Activated CD4-positive, alpha-beta T cell treated with anti-CD3 and anti-CD28 coated beads for 36 hours (primary cell): ENCODE measurements at regions of chr20 and their contacts with region 1.

Region 1: DNA sequence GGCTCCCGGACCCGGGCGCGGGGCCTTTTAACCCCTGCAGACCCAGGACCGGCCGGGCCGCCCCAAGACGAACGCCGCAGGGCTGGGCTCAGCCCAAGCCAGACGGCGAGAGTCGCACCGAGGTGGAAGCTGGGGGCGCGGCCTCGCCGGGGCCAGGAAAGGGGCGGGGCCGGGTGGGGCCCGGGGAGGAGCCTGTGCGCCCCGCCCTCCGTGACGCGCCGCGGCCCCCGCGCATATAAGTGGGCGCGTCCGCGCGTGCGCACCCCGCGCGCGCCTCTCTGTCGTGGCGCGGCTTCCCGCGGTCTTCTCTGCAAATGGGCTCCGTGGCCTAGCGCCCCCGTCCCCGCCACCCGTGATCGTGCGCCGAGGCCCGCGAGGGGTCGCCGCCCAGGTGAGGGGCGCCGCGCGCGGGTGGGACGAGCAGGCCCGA is at the start of gene PPDPF:
- DNase-seq: peak; percentile 93
- ATAC-seq: peak; percentile 80
- H3K4me3 Mint-ChIP-seq: peak within 1 kb of the TSS; percentile 77
- H3K27ac Mint-ChIP-seq: peak within 1 kb of the TSS; percentile 78
- H3K4me1 Mint-ChIP-seq: peaks cover 10% of the 10 kb centered on the region
- H3K27me3 Mint-ChIP-seq: no peaks in the 10 kb centered on the region
- total RNA-seq, gene PPDPF: 119 to 133 TPM

Region 2: DNA sequence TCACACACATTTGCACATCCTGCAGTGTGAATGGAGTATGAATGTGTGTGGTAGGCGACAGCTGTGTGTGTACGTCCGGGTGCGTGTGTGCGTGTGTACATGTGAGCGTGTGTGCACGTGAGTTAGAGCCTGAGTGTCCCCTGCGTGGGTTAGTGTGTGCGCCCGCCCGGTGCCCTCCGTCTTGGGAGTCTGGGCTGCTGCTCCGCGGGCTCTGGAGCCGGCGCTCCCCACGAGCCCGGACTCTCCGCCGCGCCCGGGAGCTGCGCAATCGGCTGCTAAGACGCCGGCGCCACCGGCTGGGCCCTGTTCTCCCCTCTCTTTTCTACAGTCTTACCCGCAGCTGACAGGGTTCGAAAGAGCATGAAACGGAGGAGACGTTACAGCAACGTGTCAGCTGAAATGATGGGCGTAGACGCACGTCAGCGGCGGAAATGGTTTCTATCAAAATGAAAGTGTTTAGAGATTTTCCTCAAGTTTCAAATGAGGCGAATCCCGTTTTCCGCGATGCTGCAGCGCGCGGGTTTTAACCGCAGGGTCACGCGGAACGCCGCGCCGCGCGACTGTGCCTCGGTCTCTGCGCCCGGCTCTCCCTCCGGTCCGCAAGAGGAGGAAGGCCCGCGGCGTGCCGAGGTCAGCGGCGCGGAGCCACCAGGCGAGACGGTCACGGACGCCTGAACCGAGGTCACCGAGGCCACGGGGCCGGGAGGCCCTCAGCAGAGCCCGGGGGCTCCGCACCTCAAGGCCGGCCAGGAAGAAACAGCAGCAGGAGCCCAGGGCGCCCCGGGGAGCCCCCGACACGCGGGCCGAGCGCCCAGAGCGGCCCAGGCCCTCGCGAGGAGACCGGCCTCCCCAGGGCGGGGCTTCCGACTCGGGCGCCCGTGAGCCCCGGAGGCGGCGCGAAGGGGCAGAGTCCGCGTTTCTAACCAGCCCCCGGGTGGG is 418.5 kb before region 1 on chr20:
- CTCF ChIA-PET with region 1: no interaction called
- POLR2A ChIA-PET with region 1: no interaction called
- intact Hi-C with region 1: loop called in 1 of 2 experiments (anchors 2 kb)
- DNase-seq: peak; percentile 85
- ATAC-seq: peak; percentile 74
- H3K4me3 Mint-ChIP-seq: peak overlapping the region; percentile 77
- H3K27ac Mint-ChIP-seq: peak overlapping the region; percentile 87
- H3K4me1 Mint-ChIP-seq: peaks cover 5% of the 10 kb centered on the region
- H3K27me3 Mint-ChIP-seq: no peaks in the 10 kb centered on the region

Region 3: DNA sequence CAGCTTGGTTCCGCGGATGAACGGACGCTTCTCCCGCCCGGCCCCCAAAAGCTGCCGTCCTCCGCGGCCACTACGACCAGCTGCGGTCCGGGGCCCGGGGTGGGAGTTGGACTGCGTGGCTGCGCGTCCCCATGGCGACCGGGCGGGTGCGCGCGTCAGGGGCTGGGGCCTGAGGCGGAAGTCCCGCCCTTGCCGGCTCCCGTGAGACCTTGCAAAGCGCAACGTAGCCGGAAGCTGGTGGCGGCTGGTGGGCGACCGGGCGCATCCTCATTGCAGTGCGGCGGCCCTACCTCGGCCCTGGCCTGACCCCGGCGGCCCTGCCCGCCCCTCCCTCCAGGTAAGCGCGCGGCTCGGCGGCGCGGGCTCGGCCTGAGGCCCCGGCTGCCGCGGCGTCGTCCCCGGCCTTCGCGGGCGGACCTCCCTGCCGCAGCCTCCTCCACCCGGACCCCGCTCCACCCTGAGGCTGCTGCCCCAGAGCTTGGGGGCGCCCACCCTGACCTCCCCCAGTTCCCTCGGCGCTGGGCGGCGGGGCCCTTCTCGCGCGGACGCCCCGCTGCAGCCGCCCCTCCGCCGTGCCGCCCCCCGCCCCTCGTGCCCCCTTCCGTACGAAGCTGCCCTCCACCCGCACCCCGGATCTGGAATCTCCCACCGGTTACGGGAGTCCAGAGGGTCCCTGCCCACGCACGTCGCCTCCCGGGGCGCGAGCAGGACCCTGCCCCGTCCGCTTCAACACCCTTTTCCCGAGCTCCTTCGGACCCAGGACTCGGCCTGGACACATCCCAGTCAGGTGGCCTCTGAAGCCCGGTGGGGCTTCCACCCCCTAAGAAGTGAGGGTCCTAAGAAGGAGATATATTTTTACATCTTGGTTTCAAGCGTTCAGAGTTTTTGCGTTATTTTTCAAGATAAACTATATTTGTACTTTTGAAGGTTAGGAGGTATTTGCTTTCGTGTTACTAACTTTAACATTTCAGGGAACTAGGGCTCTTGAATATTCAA is 247.6 kb before region 1 on chr20 and contains the start of gene ARFGAP1:
- CTCF ChIA-PET with region 1: no interaction called
- POLR2A ChIA-PET with region 1: no interaction called
- intact Hi-C with region 1: loop called in 1 of 2 experiments (anchors 5 kb)
- DNase-seq: peak; percentile 94
- ATAC-seq: peak; percentile 99
- H3K4me3 Mint-ChIP-seq: peak within 1 kb of the TSS; percentile 79
- H3K27ac Mint-ChIP-seq: peak within 1 kb of the TSS; percentile 83
- H3K4me1 Mint-ChIP-seq: peaks cover 27% of the 10 kb centered on the region
- H3K27me3 Mint-ChIP-seq: no peaks in the 10 kb centered on the region
- total RNA-seq, gene ARFGAP1: 73.4 to 77.6 TPM

Region 4: GRCh38 chr20:63495741-63496595 is 24.6 kb before region 1 on chr20:
- CTCF ChIA-PET with region 1: interaction called, 4 read pairs
- POLR2A ChIA-PET with region 1: no interaction called
- intact Hi-C with region 1: loop called (anchors 1 to 2 kb)
- DNase-seq: peak; percentile 88
- ATAC-seq: peak; percentile 80
- H3K4me3 Mint-ChIP-seq: peak overlapping the region; percentile 43
- H3K27ac Mint-ChIP-seq: no peak overlapping the region
- H3K4me1 Mint-ChIP-seq: peaks cover 2% of the 10 kb centered on the region
- H3K27me3 Mint-ChIP-seq: peaks cover 14% of the 10 kb centered on the region

Region 5: GRCh38 chr20:63641792-63642544 is 121.4 kb after region 1 on chr20:
- CTCF ChIA-PET with region 1: interaction called, 3 read pairs
- POLR2A ChIA-PET with region 1: no interaction called
- intact Hi-C with region 1: loop called in 1 of 2 experiments (anchors 1 kb)
- DNase-seq: peak; percentile 98
- ATAC-seq: peak; percentile 73
- H3K4me3 Mint-ChIP-seq: peak overlapping the region; percentile 65
- H3K27ac Mint-ChIP-seq: no peak overlapping the region
- H3K4me1 Mint-ChIP-seq: peaks cover 31% of the 10 kb centered on the region
- H3K27me3 Mint-ChIP-seq: no peaks in the 10 kb centered on the region

Region 6: DNA sequence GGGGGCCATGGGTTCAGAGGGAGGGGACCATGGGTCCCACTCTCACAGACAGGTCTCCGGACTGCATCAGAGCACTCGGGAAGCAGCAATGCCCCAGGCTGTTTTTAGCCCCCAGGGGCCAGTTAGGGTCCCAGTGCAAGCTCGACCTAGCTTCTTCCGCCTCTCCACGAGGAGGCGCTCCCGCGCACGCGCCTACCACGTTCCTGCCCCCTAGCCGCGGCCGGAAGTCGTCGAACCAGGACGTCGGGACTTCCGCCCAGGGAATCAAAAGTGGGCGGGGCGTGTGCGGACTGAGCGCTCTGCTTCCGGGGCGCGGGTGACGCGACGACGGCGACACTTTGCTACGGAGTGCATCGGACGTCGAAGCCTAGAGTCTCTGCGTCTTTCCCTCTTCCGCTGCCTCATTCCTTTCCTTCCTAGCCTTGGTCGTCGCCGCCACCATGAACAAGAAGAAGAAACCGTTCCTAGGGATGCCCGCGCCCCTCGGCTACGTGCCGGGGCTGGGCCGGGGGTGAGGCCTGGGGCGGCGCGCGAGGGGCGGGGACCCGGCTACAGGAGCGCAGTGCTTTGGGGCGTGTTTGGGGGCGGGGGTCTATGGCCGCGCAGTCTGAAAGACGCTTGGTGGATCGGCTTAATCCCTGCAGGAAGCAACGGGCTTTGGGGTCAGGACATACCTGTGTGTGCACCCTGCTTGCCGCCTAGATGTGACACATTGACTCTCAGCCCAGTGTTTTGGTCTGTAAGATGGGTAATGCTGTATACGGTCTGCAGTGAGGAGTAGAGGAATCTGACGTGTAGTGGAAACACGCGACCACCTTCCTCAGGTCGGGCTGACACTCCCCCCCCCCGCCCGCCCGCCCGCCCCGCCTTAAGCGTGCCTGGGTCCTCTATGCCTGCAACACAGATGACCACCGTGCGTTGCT is 460.5 kb after region 1 on chr20 and contains the start of gene PRPF6:
- CTCF ChIA-PET with region 1: no interaction called
- POLR2A ChIA-PET with region 1: interaction called, 4 read pairs
- intact Hi-C with region 1: loop called in 1 of 2 experiments (anchors 1 kb)
- DNase-seq: peak; percentile 98
- ATAC-seq: peak; percentile 47
- H3K4me3 Mint-ChIP-seq: peak within 1 kb of the TSS; percentile 97
- H3K27ac Mint-ChIP-seq: peak within 1 kb of the TSS; percentile 98
- H3K4me1 Mint-ChIP-seq: peaks cover 59% of the 10 kb centered on the region
- H3K27me3 Mint-ChIP-seq: no peaks in the 10 kb centered on the region
- total RNA-seq, gene PRPF6: 60.5 to 67.0 TPM

Region 7: DNA sequence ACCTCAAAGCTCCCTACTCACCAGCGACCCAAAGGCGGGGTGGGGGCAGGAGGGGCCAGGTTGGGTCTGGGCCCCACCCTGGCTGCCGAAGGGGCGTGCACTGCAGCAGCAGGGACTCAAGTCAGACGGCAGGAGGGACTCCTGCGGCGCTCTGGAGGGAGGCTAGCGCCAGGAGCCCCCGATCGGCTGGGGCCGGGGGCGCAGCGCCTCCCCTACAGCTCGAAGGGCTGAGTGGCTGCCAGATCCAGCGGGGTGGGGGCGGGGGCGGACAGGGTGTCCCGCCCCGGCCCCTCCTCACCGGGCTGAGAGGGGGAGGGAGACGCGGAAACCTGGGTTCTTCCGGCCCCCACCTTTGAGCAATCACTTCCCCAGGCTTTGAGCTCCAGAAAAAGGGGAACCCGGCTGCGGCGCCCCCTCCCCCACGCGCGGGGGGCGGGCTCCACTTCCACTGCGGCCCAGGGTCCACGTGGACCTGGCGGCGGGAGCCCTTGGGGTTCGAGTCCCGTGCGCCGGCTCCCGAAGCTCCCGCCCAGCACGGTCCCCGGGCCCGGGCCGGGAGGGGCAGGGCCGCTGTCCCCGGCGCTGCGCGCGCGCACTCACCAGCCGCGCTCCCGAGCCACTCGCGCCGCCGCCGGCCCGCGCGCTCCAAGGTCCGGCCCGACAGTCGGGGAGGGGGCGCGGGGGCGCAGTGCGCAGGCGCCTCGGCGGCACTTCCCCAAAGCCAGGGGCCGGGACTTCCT is 558.9 kb after region 1 on chr20 and contains the start of gene RGS19:
- CTCF ChIA-PET with region 1: interaction called, 3 read pairs
- POLR2A ChIA-PET with region 1: no interaction called
- intact Hi-C with region 1: loop called in 1 of 2 experiments (anchors 1 kb)
- DNase-seq: peak; percentile 77
- ATAC-seq: peak; percentile 43
- H3K4me3 Mint-ChIP-seq: peak within 1 kb of the TSS; percentile 90
- H3K27ac Mint-ChIP-seq: peak within 1 kb of the TSS; percentile 88
- H3K4me1 Mint-ChIP-seq: peaks cover 28% of the 10 kb centered on the region
- H3K27me3 Mint-ChIP-seq: peaks cover 3% of the 10 kb centered on the region
- total RNA-seq, gene RGS19: 39.6 to 40.2 TPM